CD4-positive, alpha-beta memory T cell (primary cell): ENCODE measurements at regions of chr10 and their contacts with region 1.

Region 1: GRCh38 chr10:14588084-14588937 is 186.4 kb downstream of the FAM107B start:
- DNase-seq: peak; percentile 44 to 81 (median 52)
- H3K4me3 ChIP-seq: peak overlapping the region in 1 of 2 donors; percentile 37
- H3K4me3 Mint-ChIP-seq: peak overlapping the region; percentile 76 to 90 (median 86)
- H3K27ac ChIP-seq: peak overlapping the region; percentile 86
- H3K27ac Mint-ChIP-seq: peak overlapping the region; percentile 96 to 100 (median 98)
- H3K4me1 ChIP-seq: peaks cover 95% of the 10 kb centered on the region
- H3K4me1 Mint-ChIP-seq: peaks cover 82 to 96% (median 87%) of the 10 kb centered on the region in 4 donors
- H3K27me3 ChIP-seq: no peaks in the 10 kb centered on the region
- H3K27me3 Mint-ChIP-seq: no peaks in the 10 kb centered on the region

Region 2: DNA sequence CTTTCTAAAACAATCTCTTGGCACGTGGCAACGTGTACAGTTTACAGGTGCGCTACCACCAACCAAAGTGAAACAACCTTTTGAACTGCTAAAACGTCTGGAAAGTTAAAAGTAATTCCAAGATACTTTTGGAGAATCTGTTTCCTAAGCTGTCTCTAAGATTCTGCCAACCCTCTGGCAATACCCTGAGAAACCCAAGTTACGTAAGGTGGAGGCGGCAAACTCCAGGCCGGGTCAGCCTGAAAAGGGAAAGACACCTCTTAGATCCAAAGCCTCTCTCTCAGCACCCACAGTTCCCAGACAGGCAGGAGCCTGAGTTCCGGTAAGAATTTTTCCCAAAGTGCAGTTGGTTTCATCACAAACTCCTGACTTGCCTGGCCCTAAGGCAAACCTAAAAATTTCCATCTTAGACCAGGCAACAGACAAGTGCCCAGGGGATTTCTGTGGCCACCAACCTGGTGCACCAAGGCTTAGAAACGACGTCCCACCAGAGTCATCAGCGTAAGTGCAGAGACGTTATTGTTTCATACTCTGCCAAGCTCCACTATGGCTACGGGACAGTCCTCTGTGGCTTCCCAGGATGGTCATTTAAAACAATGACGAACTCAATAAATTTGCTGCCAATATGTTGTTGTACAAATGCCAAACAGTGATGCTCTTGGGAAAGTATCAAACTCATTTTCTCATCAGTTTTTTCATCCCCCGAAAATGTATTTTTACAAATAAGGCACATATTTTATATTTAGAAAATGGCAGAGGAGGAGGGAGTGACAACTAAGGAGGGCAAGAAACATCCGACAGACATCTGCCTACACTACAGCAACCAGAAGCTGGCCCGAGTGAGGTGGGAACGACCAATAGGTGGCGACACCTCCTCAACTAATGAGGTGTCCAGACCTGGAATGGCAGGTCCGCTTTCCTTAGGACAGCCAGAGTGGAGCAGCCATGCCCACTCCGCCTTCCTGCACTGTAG is 51.8 kb before region 1 on chr10:
- CTCF ChIA-PET with region 1: interaction called, 11 read pairs
- POLR2A ChIA-PET with region 1: interaction called, 7 read pairs
- intact Hi-C with region 1: no loop called
- DNase-seq: peak in 1 of 5 donors; percentile 30
- H3K4me3 ChIP-seq: no peak overlapping the region
- H3K4me3 Mint-ChIP-seq: peak overlapping the region in 1 of 8 donors; percentile 15
- H3K27ac ChIP-seq: peak overlapping the region; percentile 27
- H3K27ac Mint-ChIP-seq: peak overlapping the region; percentile 15 to 94 (median 83)
- H3K4me1 ChIP-seq: peaks cover 91% of the 10 kb centered on the region
- H3K4me1 Mint-ChIP-seq: peaks cover 71 to 100% (median 87%) of the 10 kb centered on the region in 4 donors
- H3K27me3 ChIP-seq: no peaks in the 10 kb centered on the region
- H3K27me3 Mint-ChIP-seq: no peaks in the 10 kb centered on the region

Region 3: DNA sequence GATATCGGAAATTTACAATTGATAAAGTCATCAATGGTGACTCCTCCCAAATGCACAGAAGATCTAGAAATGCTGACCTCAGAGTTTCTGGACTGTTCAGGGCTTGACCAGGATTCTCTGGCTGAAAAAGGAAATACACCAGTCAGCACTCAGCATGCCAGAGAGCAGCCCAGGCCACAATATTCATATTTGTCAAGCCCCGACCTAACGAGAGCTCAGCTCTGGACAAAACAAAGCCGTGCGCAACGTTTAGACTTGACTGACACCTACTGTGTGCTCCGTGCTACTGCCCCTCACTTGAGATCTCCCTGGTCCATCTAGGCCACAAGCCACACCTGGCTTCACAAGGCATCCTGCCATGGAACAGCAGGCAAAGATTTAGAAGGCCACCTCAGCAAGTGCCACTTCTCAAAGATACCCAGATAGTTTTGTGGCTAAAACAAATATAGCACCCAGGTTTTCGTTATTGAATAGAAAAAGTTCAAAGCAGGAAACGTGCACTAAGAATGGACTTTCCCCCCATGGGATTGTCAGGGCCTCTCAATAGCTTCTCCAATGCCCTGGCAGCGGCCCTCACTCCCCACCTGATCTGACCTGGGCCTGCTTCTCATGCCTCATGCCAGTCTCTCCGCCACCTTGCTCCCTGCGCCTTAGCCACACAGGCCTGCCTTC is 31.9 kb before region 1 on chr10:
- CTCF ChIA-PET with region 1: interaction called, 5 read pairs
- POLR2A ChIA-PET with region 1: interaction called, 640 read pairs
- intact Hi-C with region 1: loop called (anchors 1 kb)
- DNase-seq: peak in 4 of 5 donors; percentile 34 to 64 (median 47)
- H3K4me3 ChIP-seq: no peak overlapping the region
- H3K4me3 Mint-ChIP-seq: peak overlapping the region; percentile 53 to 87 (median 75)
- H3K27ac ChIP-seq: peak overlapping the region; percentile 65
- H3K27ac Mint-ChIP-seq: peak overlapping the region; percentile 93 to 97 (median 94)
- H3K4me1 ChIP-seq: peaks cover 100% of the 10 kb centered on the region
- H3K4me1 Mint-ChIP-seq: peaks cover 80 to 99% (median 89%) of the 10 kb centered on the region in 4 donors
- H3K27me3 ChIP-seq: no peaks in the 10 kb centered on the region
- H3K27me3 Mint-ChIP-seq: no peaks in the 10 kb centered on the region

Region 4: GRCh38 chr10:14571866-14572507 is 16.3 kb before region 1 on chr10:
- CTCF ChIA-PET with region 1: interaction called, 26 read pairs
- POLR2A ChIA-PET with region 1: interaction called, 640 read pairs
- intact Hi-C with region 1: loop called (anchors 1 kb)
- DNase-seq: peak; percentile 86 to 91 (median 89)
- H3K4me3 ChIP-seq: peak overlapping the region; percentile 70 to 75
- H3K4me3 Mint-ChIP-seq: peak overlapping the region; percentile 90 to 98 (median 94)
- H3K27ac ChIP-seq: peak overlapping the region; percentile 82
- H3K27ac Mint-ChIP-seq: peak overlapping the region; percentile 94 to 100 (median 97)
- H3K4me1 ChIP-seq: peaks cover 93% of the 10 kb centered on the region
- H3K4me1 Mint-ChIP-seq: peaks cover 58 to 97% (median 79%) of the 10 kb centered on the region in 4 donors
- H3K27me3 ChIP-seq: no peaks in the 10 kb centered on the region
- H3K27me3 Mint-ChIP-seq: no peaks in the 10 kb centered on the region

Region 5: GRCh38 chr10:14604181-14605142 is 16.2 kb after region 1 on chr10:
- CTCF ChIA-PET with region 1: interaction called, 14 read pairs
- POLR2A ChIA-PET with region 1: interaction called, 37 read pairs
- intact Hi-C with region 1: loop called (anchors 1 kb)
- DNase-seq: peak; percentile 67 to 79 (median 70)
- H3K4me3 ChIP-seq: peak overlapping the region; percentile 48 to 86
- H3K4me3 Mint-ChIP-seq: peak overlapping the region; percentile 89 to 100 (median 96)
- H3K27ac ChIP-seq: peak overlapping the region; percentile 76
- H3K27ac Mint-ChIP-seq: peak overlapping the region; percentile 92 to 100 (median 97)
- H3K4me1 ChIP-seq: peaks cover 43% of the 10 kb centered on the region
- H3K4me1 Mint-ChIP-seq: peaks cover 38 to 59% (median 49%) of the 10 kb centered on the region in 4 donors
- H3K27me3 ChIP-seq: no peaks in the 10 kb centered on the region
- H3K27me3 Mint-ChIP-seq: no peaks in the 10 kb centered on the region

Region 6: GRCh38 chr10:14665304-14665703 is 77.0 kb after region 1 on chr10:
- CTCF ChIA-PET with region 1: no interaction called
- POLR2A ChIA-PET with region 1: no interaction called
- intact Hi-C with region 1: no loop called
- DNase-seq: no peak
- H3K4me3 ChIP-seq: no peak overlapping the region
- H3K4me3 Mint-ChIP-seq: no peak overlapping the region
- H3K27ac ChIP-seq: no peak overlapping the region
- H3K27ac Mint-ChIP-seq: no peak overlapping the region
- H3K4me1 ChIP-seq: peaks cover 10% of the 10 kb centered on the region
- H3K4me1 Mint-ChIP-seq: peaks cover 10 to 35% (median 20%) of the 10 kb centered on the region in 4 donors
- H3K27me3 ChIP-seq: no peaks in the 10 kb centered on the region
- H3K27me3 Mint-ChIP-seq: no peaks in the 10 kb centered on the region